ENCODE measurements at regions of chr5 and their contacts with region 1.

Region 1: GRCh38 chr5:115544436-115545350 is at the start of gene FEM1C:
- DNase-seq: peak; percentile 91 to 98 (median 95)
- H3K4me3 ChIP-seq: peak within 1 kb of the TSS; percentile 74
- H3K4me3 Mint-ChIP-seq: peak within 1 kb of the TSS; percentile 94 to 100 (median 97)
- H3K27ac ChIP-seq: peak within 1 kb of the TSS; percentile 91
- H3K27ac Mint-ChIP-seq: peak within 1 kb of the TSS; percentile 93 to 100 (median 98)
- H3K4me1 ChIP-seq: peaks cover 43% of the 10 kb centered on the region
- H3K4me1 Mint-ChIP-seq: peaks cover 45 to 50% (median 49%) of the 10 kb centered on the region in 3 donors
- H3K27me3 ChIP-seq: no peaks in the 10 kb centered on the region
- H3K27me3 Mint-ChIP-seq: peaks cover 0 to 2% of the 10 kb centered on the region in 2 donors
- total RNA-seq, gene FEM1C: 14.1 to 14.7 TPM

Region 2: DNA sequence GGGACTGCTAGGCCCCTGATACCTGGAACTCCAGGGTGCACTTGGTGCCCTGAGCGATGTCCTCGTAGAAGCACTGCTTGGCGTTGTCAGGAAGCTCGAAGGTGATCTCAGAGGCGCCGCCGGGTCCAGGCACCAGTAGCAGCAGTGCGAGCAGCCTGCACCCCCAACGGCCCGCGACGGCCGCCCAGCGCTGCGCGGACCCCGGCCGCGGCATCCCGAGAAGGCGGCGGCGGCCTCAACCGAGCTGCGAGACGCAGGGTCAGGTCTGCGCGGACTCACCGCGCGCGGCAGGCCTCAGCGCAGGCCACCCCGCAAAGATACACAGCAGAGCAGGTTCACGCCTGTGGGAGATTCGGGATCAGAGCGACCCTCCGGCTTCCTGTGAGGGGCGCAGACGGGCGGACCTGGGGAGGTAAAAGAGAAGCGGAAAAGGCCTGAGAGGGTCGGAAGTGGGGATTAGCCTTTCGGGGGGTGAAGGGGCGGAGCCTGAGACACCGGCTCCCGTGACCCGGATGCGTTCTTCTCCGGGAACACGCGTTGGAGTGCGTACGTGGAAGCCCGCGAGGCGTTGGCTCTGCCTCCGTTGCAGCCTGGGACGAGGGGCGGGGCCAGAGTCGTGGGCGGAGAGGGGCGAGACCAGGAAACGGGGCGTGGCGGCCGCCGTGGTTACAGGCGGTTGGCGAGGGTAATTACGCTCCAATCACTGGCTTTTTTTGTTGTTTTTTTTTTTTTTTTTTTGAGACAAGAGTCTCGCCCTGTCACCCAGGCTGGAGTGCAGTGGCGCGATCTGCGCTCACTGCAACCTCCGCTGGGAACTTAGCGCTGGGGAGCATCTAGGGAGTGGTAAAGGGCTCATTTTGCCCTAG is 81.1 kb after region 1 on chr5 and contains the start of gene TMED7:
- CTCF ChIA-PET with region 1: no interaction called
- POLR2A ChIA-PET with region 1: interaction called, 13 read pairs
- DNase-seq: peak; percentile 99 to 100 (median 99)
- H3K4me3 ChIP-seq: peak within 1 kb of the TSS; percentile 80
- H3K4me3 Mint-ChIP-seq: no peak within 1 kb of the TSS
- H3K27ac ChIP-seq: peak within 1 kb of the TSS; percentile 85
- H3K27ac Mint-ChIP-seq: peak within 1 kb of the TSS in 5 of 8 donors; percentile 95 to 100 (median 98)
- H3K4me1 ChIP-seq: peaks cover 35% of the 10 kb centered on the region
- H3K4me1 Mint-ChIP-seq: peaks cover 21 to 25% (median 25%) of the 10 kb centered on the region in 3 donors
- H3K27me3 ChIP-seq: no peaks in the 10 kb centered on the region
- H3K27me3 Mint-ChIP-seq: no peaks in the 10 kb centered on the region
- total RNA-seq, gene TMED7: 47.7 to 47.8 TPM

Region 3: GRCh38 chr5:115641948-115642347 is 97.3 kb after region 1 on chr5:
- CTCF ChIA-PET with region 1: no interaction called
- POLR2A ChIA-PET with region 1: no interaction called
- DNase-seq: no peak
- H3K4me3 ChIP-seq: no peak overlapping the region
- H3K4me3 Mint-ChIP-seq: no peak overlapping the region
- H3K27ac ChIP-seq: no peak overlapping the region
- H3K27ac Mint-ChIP-seq: no peak overlapping the region
- H3K4me1 ChIP-seq: no peaks in the 10 kb centered on the region
- H3K4me1 Mint-ChIP-seq: no peaks in the 10 kb centered on the region
- H3K27me3 ChIP-seq: no peaks in the 10 kb centered on the region
- H3K27me3 Mint-ChIP-seq: peaks cover 6 to 26% of the 10 kb centered on the region in 2 donors